ENCODE measurements at regions of chr9 and their contacts with region 1.

Region 1: DNA sequence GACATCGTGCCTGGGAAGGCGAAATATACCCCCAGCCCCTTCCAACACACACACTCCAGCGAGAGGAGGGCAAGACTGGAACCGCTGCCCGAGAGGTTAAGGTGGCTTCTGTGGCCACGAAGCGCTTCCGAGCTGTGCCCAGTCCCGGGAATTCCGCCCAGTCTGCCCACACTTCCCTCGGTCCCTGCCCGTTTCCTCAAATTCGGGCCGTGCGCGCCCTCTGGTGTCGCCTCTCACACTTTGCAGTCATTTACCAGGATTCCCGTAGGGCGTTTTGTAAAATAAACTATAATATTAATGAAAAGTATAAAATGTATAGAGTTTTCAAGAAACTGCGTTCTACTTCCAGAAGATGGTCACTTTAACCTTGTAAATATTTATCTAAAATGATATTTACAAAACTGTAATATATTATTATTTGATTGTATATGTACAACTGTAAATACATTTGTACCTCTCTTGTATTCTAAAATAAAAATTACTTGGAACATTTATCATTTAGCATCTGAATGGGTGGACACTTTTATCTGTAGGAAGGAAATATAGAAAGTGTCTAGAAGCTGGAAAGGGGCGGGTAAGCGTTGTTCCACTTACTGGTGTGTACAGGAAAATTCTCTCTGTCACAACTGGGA is 11.0 kb upstream of the EXOSC2 start:
- DNase-seq: peak; percentile 68
- H3K4me3 Mint-ChIP-seq: peak overlapping the region; percentile 74
- H3K27ac Mint-ChIP-seq: peak overlapping the region; percentile 56
- H3K4me1 Mint-ChIP-seq: peaks cover 12% of the 10 kb centered on the region
- H3K27me3 Mint-ChIP-seq: peaks cover 74% of the 10 kb centered on the region

Region 2: DNA sequence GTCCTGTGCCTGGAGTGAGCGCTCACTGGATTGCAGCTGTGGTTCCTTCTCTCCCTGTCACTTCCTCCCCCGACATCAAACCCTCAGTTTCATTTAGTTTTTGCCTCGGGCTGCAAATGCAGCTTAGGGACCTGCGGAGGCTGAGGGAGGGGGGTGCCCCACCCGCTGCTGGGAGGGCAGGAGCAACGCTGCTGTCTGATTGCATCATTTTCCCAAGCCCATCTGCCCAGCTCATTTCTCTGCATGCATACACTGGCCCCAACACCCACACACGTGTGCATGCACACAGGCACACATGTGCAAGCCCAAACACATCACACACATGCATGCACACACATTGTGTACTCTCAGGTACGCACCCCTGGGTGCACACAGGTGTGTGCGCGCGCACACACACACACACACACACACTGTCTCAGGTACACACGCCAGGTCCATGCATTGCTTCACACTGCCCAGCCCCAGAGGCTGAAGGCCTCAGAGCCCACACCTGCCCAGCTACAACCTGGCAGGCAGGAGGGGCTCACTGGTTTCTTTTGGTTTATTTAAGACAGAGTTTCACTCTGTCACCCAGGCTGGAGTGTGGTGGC is 234.5 kb before region 1 on chr9:
- CTCF ChIA-PET with region 1: interaction called, 10 read pairs
- DNase-seq: peak; percentile 36
- H3K4me3 Mint-ChIP-seq: no peak overlapping the region
- H3K27ac Mint-ChIP-seq: peak overlapping the region; percentile 49
- H3K4me1 Mint-ChIP-seq: peaks cover 32% of the 10 kb centered on the region
- H3K27me3 Mint-ChIP-seq: peaks cover 84% of the 10 kb centered on the region

Region 3: DNA sequence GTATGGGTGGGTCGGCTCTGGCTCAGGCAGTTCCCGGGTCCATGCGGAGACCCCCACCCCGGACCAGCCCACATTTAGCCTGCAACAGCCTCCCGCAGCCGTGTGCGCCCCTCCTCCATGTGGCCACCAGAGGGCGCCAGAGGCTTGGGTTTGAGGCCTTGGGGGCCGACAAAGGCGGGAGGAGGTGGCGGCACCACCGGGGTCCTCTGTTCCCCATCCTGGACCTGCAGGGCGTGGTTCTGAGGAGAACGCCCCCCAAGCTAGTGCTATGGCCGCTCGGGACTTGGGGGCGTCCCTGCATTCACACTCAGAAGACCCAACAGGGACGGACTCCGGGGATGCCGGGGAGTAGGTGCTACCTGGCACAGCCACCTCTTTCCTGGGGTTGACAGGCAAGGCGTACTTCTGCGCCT is 221.4 kb before region 1 on chr9:
- CTCF ChIA-PET with region 1: interaction called, 118 read pairs
- DNase-seq: peak; percentile 76
- H3K4me3 Mint-ChIP-seq: no peak overlapping the region
- H3K27ac Mint-ChIP-seq: no peak overlapping the region
- H3K4me1 Mint-ChIP-seq: no peaks in the 10 kb centered on the region
- H3K27me3 Mint-ChIP-seq: peaks cover 52% of the 10 kb centered on the region

Region 4: GRCh38 chr9:130467371-130467770 is 215.2 kb before region 1 on chr9:
- CTCF ChIA-PET with region 1: interaction called, 118 read pairs
- DNase-seq: no peak
- H3K4me3 Mint-ChIP-seq: no peak overlapping the region
- H3K27ac Mint-ChIP-seq: no peak overlapping the region
- H3K4me1 Mint-ChIP-seq: no peaks in the 10 kb centered on the region
- H3K27me3 Mint-ChIP-seq: peaks cover 81% of the 10 kb centered on the region

Region 5: DNA sequence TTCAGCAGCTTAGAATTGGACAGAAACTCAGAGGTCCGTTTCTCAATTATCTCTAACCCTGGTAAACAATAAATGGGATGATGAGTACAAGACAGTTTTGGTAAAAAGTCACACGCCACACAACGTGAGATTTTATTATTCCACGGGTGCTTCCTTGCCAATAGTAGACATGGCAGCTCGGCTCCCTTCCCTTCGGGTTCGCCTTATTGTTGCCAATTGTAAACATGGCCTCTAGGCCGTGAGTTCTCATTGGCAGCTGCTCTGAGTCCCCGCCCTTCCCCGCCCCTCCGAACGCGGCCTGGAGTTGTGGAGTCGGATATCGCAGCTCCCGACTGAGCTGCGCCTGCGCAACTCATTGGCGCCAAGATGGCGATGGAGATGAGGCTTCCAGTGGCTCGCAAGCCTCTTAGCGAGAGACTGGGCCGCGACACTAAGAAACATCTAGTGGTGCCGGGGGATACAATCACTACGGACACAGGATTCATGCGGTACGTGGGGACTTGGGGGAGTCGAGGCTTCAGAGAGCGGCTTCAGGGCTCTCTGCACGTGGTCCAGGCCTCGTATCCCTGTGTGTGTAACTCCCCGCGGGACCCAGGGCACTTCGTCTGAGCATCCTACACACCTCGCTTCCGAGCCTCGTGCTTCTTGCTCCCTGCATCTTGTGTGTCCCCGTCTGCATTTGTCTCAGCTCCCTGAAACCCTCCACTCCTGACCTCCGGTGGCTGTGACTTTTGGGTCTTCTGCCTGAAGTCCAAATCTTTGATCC is 11.0 kb after region 1 on chr9 and contains the start of gene EXOSC2:
- CTCF ChIA-PET with region 1: interaction called, 15 read pairs
- DNase-seq: peak; percentile 100
- H3K4me3 Mint-ChIP-seq: peak within 1 kb of the TSS; percentile 90
- H3K27ac Mint-ChIP-seq: peak within 1 kb of the TSS; percentile 91
- H3K4me1 Mint-ChIP-seq: peaks cover 51% of the 10 kb centered on the region
- H3K27me3 Mint-ChIP-seq: peaks cover 9% of the 10 kb centered on the region